ENCODE measurements at regions of chr13 and their contacts with region 1.

Region 1: GRCh38 chr13:73708393-73708985 is 425.7 kb downstream of the KLF12 start:
- DNase-seq: peak; percentile 55
- H3K4me3 Mint-ChIP-seq: no peak overlapping the region
- H3K27ac Mint-ChIP-seq: no peak overlapping the region
- H3K4me1 Mint-ChIP-seq: peaks cover 11% of the 10 kb centered on the region
- H3K27me3 Mint-ChIP-seq: no peaks in the 10 kb centered on the region

Region 2: DNA sequence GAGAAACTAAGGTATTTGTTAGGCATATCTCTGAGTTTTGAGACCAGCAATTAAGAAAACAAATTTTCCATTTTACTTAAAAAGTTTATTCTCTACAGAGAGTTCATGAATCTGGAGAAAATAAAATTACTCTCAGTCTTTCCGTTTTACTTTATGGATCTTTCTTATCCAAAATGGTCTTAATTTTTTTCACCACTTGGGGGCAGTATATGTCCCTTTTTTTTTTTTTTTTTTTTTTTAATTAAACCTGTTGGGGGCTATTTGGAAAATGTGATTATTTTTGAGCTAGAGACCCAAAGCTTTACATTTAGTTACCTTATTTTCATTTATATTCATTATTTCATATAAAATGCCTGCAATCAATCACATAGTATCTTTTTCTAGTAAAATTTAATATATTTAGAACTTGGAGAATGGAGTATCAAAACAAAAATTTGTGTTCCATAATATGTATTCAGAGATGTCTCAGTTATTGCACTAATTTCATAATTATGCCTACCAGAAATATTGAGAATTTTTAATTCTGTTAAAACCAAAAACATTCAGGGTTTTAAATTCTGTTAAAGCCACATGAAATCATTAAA is 899.5 kb before region 1 on chr13:
- CTCF ChIA-PET with region 1: interaction called, 3 read pairs
- POLR2A ChIA-PET with region 1: no interaction called
- intact Hi-C with region 1: loop called (anchors 5 kb)
- DNase-seq: no peak
- H3K4me3 Mint-ChIP-seq: no peak overlapping the region
- H3K27ac Mint-ChIP-seq: no peak overlapping the region
- H3K4me1 Mint-ChIP-seq: peaks cover 2% of the 10 kb centered on the region
- H3K27me3 Mint-ChIP-seq: no peaks in the 10 kb centered on the region

Region 3: DNA sequence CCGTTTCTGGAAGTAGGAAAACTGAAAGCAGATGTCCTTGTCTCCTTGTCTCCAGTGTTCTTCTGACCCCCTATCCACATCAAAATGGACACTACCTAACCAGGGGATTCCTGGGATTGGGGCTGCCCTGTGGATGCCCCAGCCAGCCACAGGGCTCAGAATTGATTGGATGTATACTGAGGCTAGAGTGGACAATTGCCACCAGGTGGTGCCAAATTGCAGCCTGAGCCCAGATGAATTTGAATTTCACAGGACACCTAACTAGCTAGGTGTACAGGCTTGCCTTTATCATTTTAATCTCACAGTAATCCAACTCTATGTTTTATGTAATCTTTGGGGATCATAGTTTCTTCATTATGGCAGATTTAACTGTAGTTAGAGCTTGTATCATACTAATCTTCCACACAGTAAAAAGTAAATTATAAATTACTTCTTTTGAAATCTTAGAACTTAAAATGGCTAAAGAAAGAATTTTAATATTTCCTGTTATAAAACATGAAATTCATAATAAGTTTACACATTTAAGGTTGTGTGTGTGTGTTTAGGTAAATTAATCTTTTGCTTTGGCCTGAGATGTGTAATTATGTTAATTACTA is 868.6 kb before region 1 on chr13:
- CTCF ChIA-PET with region 1: interaction called, 5 read pairs
- POLR2A ChIA-PET with region 1: no interaction called
- intact Hi-C with region 1: loop called (anchors 1 kb)
- DNase-seq: peak; percentile 62
- H3K4me3 Mint-ChIP-seq: no peak overlapping the region
- H3K27ac Mint-ChIP-seq: no peak overlapping the region
- H3K4me1 Mint-ChIP-seq: no peaks in the 10 kb centered on the region
- H3K27me3 Mint-ChIP-seq: no peaks in the 10 kb centered on the region